ENCODE measurements at regions of chr1 and their contacts with region 1.

Region 1: GRCh38 chr1:90246069-90246468 is 251.2 kb downstream of the ZNF326 start:
- DNase-seq: no peak

Region 2: DNA sequence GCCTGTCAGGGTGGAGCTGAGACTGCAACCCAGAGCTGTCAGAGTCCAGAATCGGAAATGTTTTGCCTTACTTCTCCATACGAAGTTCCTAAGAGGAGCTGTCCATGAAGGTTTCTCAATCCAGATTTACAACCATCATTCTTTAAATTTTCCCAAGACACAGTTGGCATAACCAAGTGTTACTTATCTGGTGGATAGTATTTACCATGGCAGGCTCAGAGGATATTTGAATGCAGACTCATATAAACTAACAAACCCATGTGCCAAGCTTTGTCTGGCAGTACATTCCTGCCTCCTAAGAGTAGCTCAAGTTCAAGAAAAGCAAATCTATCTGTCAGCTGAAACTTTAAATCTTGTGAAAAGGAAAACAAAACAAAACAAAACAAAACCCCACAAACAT is 16.7 kb after region 1 on chr1:
- intact Hi-C with region 1: no loop called
- DNase-seq: no peak

Region 3: GRCh38 chr1:90274376-90274775 is 28.3 kb after region 1 on chr1:
- intact Hi-C with region 1: loop called (anchors 1 kb)
- DNase-seq: no peak

Region 4: DNA sequence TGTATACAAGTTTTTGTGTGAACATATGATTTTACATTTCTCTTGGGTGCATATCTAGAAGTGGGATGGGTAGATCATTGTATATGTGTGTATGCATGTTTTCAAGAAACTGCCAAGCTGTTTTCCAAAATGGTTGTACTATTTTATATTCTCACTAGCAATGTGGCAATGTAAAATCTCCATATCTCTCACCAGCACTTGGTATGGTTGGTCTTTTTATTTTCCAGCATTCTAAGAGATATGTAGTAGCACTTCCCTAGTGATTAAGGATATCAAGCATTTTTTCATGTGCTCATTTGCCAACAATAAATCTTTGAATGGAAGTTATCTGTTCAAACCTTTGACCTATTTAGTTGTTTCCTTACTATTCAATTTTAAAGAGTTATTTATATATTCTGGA is 59.5 kb after region 1 on chr1:
- intact Hi-C with region 1: no loop called
- DNase-seq: no peak